ENCODE measurements at regions of chr13 and their contacts with region 1.

Region 1: DNA sequence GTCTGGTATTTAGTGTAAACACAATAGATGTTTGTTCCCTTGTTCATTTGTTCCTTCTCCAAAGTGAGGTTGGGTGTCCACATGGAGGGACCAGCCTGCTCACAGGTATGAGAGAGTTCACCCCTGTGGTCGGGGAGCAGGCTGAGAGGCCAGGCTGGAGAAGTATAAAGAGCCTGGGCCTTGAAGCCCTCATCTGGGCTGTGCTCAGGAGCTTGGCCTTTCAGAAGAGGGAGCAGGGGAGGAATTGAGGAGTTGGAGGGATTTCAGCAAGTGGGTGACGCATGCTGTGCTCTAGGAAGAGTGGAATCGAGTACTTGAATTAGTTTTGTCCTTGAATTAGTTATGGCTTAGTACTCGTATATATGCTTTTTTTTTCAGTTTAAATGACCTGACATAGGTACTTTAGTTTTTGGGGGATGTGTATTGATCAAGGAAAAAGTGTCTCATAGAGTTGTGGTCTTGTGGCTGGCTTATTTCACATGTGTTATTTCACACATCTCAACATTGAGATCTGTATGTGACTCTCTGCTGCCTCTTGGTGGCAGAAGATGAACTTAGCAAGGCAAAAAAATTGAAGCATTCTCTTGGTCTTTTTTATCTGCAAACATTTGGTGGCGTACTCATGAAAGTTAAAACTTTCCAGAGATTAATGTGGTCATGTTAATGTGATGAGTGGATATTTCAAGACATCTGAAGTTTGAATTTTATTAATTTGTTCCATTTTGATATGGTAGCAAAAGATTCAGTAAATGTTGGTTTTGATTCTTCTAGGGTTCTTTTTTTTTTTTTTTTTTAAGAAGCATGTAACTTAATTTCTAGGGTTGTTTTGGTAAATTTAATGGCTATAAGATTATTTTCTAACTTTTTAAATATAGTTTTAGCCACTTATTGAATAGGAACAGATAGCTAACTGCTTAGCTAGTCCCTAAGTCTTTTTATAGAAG is 54.3 kb downstream of the SLAIN1 start:
- ATAC-seq: peak; percentile 40 to 72 (median 54)
- H3K4me3 ChIP-seq: no peak overlapping the region
- H3K27ac ChIP-seq: no peak overlapping the region
- H3K4me1 ChIP-seq: peaks cover 4 to 6% of the 10 kb centered on the region in 2 donors

Region 2: DNA sequence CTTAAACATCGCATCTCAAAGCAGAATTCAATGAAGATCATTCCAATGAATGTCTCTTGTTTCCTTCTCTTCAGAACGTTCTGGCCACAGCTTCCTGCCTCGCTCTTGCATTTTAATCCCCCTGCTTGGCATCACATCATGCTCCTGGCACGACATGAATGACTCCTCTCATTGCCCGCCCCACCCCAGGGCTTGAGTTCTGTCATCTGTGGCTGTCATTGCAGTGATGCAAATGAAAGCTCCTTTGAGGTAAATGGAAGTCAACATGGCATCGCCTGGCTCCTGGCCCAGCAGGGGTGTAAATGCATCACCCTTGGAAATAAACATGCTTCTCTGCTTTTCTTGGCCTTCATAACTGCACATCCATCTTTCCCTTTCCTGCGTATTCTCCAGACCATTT is 167.7 kb before region 1 on chr13:
- in situ Hi-C with region 1: loop called in 2 of 9 experiments (anchors 25 kb)
- ATAC-seq: peak in 1 of 8 experiments; percentile 64
- H3K4me3 ChIP-seq: no peak overlapping the region
- H3K27ac ChIP-seq: no peak overlapping the region
- H3K4me1 ChIP-seq: peaks cover 5 to 12% of the 10 kb centered on the region in 2 donors

Region 3: DNA sequence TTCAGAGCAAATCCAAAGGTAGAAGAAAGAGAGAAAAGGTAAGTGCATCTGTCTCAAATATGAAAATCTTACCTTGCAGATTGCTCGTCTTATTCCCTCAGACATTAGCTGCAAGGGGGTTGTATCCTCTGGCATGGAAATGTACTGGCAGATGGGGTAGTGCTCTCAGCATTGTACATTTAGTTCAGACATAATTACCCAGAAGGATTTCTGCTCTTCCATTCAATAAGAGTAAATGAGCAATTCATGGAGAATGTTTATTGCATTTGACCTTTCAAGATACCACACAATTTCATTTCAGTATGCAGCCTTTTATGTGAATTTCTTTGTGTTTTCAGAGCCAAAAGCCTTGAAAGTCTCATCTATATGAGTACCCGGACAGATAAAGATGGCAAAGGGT is 152.4 kb before region 1 on chr13:
- in situ Hi-C with region 1: loop called in 3 of 9 experiments (anchors 10 to 25 kb)
- ATAC-seq: peak in 1 of 8 experiments; percentile 47
- H3K4me3 ChIP-seq: no peak overlapping the region
- H3K27ac ChIP-seq: no peak overlapping the region
- H3K4me1 ChIP-seq: peaks cover 0 to 9% of the 10 kb centered on the region in 2 donors